K562 (cell line): ENCODE measurements at regions of chr2 and their contacts with region 1.

Region 1: DNA sequence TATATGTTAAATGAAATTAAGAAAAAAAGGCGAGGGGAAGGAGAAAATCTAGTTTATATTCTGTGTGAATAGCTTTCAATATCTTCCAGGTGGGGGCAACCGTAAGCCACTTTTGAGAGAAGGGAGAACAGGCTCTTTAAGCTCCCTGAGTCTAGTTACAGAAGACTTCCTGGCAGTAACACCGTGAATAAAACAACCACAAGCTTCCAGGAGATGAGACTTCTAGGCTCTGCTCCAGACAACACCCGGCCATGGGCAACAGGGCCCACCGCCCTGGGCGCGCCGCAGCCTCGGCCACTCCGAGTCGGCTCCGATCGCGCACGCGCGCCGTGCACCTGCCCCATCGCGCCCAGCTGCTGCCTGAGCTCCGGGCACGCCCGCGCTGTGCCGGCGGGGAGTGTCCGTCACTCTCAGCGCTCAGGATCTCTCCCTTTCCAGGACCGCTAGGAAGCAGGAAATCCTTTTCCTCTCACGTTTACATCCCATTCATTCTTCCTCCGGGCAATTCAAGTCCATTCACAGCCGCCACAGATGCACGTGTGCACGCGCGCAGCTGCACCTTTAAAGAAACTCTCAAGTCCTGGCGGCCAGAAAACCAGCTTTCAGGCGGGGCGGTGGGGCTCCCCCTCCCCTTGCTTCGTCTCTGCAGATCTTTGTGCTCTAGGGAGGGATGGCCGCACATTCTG is 19.4 kb upstream of the PAX3 start:
- DNase-seq: peak in 2 of 4 experiments; percentile 15 to 17
- ATAC-seq: peak; percentile 77
- H3K4me3 ChIP-seq: peak overlapping the region; percentile 8; the same call in 1 of the 2 replicates
- H3K27ac ChIP-seq: no peak overlapping the region
- H3K4me1 ChIP-seq: peaks cover 0 to 4% of the 10 kb centered on the region in 2 experiments; a peak in 2 of 5 replicates
- H3K27me3 ChIP-seq: no peaks in the 10 kb centered on the region
- CTCF ChIP-seq: peak in 1 of 3 experiments; percentile 23; a peak in 2 of 6 replicates
- EP300 ChIP-seq: no peak
- POLR2A ChIP-seq: no peak
- RAD21 ChIP-seq: peak; percentile 27 to 38; a peak in 3 of 4 replicates

Region 2: DNA sequence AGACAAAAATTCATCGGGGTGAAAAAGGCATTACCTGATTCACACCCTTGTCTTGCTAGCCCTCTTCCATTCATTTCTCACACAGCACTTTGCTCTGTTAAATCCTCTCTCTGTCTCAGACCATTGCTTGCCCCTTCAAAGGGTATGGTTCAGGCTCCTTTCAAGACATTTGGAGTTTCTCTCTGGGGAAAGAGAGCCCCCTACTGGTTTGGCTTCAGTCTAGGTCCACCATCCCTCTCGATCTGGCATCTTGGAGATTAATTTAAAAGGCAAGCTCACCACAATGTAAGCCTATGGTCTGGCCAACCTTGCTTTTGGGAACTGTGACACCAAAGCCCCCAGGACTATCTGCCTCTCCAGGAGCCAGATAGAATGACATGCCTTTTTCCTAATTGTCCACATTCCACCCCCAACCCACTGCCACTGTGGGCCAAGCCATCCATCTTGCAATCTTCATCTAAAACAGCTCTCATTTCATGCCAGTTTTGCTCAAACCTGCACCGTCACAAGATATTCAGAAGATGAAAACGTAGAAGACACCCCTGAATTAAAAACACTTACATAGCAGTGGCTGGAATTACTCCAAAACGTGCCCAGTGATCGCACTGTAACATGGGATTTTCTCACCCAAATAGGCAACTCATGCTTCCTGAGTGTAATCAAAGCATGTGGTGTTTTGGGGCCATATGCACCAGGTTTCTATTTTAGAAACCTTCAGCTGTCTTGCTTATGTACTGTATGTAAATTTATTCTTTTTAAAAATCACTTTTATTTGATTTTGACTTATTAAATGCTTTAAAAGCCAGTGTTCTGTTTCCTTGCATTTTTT is 243.9 kb after region 1 on chr2:
- CTCF ChIA-PET with region 1: interaction called, 5 read pairs
- POLR2A ChIA-PET with region 1: no interaction called
- in situ Hi-C with region 1: loop called (anchors 25 kb)
- intact Hi-C with region 1: loop called (anchors 2 kb)
- DNase-seq: peak; percentile 22 to 58 (median 34)
- ATAC-seq: peak; percentile 85
- H3K4me3 ChIP-seq: no peak overlapping the region
- H3K27ac ChIP-seq: no peak overlapping the region
- H3K4me1 ChIP-seq: no peaks in the 10 kb centered on the region
- H3K27me3 ChIP-seq: no peaks in the 10 kb centered on the region
- CTCF ChIP-seq: peak; percentile 39 to 66 (median 59)
- EP300 ChIP-seq: no peak
- POLR2A ChIP-seq: 0 out of 2 replicates have a peak, but pooled peaks have one; percentile 10
- RAD21 ChIP-seq: peak; percentile 43 to 61; a peak in 3 of 4 replicates